Right cardiac atrium (tissue), 5 donors: ENCODE measurements at regions of chr6 and their contacts with region 1.

Region 1: GRCh38 chr6:73329201-73329600 is 24.9 kb downstream of the DPPA5 start:
- DNase-seq: no peak
- ATAC-seq: no peak
- H3K4me3 ChIP-seq: no peak overlapping the region
- H3K27ac ChIP-seq: no peak overlapping the region
- H3K4me1 ChIP-seq: no peaks in the 10 kb centered on the region
- H3K27me3 ChIP-seq: no peaks in the 10 kb centered on the region

Region 2: GRCh38 chr6:73121421-73121993 is 207.7 kb before region 1 on chr6:
- intact Hi-C with region 1: no loop called
- DNase-seq: no peak
- ATAC-seq: no peak
- H3K4me3 ChIP-seq: no peak overlapping the region
- H3K27ac ChIP-seq: no peak overlapping the region
- H3K4me1 ChIP-seq: no peaks in the 10 kb centered on the region
- H3K27me3 ChIP-seq: no peaks in the 10 kb centered on the region

Region 3: GRCh38 chr6:73285674-73286283 is 43.4 kb before region 1 on chr6:
- intact Hi-C with region 1: loop called in 2 of 4 experiments (anchors 5 kb)
- DNase-seq: no peak
- ATAC-seq: peak in 1 of 2 donors; percentile 56
- H3K4me3 ChIP-seq: no peak overlapping the region
- H3K27ac ChIP-seq: no peak overlapping the region
- H3K4me1 ChIP-seq: no peaks in the 10 kb centered on the region
- H3K27me3 ChIP-seq: no peaks in the 10 kb centered on the region